Activated CD4-positive, alpha-beta memory T cell treated with anti-CD3 and anti-CD28 coated beads for 36 hours (primary cell): ENCODE measurements at regions of chr9 and their contacts with region 1.

Region 1: GRCh38 chr9:114385412-114386181 is 2.2 kb downstream of the AKNA start:
- DNase-seq: peak; percentile 95
- H3K4me3 Mint-ChIP-seq: peak overlapping the region; percentile 99
- H3K27ac Mint-ChIP-seq: peak overlapping the region; percentile 94
- H3K4me1 Mint-ChIP-seq: peaks cover 65% of the 10 kb centered on the region
- H3K27me3 Mint-ChIP-seq: no peaks in the 10 kb centered on the region

Region 2: DNA sequence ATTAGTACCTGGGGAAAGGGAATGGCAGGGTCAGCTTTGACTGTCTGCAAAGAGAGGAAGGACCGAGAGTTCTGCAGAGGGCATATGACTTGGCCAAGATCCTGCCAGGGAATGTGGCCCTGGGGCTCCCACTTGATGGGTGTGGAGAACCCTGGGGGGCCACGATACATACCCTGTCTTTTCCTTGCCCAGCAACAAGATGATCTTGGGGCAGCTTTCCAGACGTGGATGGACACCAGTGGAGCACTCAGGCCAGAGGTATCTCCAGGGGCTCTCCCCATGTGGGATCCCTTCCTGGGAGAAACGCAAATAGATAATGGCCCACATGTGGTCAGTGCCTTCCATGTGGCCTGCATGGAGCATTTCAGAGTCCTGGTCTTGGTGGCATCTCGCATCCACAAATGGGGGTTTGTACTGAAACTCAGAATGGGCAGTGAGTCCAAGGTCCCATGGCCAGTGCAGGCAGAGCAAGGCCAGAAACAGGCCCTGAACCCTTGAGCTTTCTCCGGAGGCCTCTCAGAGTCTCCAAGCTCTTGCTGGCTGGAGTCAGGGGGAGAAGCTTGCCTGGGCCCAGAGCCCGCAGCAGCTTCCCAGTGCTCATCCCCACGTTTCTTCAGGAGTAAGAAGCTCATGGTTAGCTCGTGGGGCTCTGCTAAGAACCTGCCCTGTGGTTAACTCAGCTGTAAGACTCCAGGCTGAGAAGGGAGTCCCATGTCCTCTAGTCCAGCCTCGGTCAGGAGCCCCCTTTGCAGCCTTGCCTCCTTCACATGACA is 81.0 kb before region 1 on chr9:
- CTCF ChIA-PET with region 1: no interaction called
- POLR2A ChIA-PET with region 1: no interaction called
- intact Hi-C with region 1: no loop called
- DNase-seq: peak; percentile 4
- H3K4me3 Mint-ChIP-seq: no peak overlapping the region
- H3K27ac Mint-ChIP-seq: no peak overlapping the region
- H3K4me1 Mint-ChIP-seq: peaks cover 4% of the 10 kb centered on the region
- H3K27me3 Mint-ChIP-seq: no peaks in the 10 kb centered on the region

Region 3: DNA sequence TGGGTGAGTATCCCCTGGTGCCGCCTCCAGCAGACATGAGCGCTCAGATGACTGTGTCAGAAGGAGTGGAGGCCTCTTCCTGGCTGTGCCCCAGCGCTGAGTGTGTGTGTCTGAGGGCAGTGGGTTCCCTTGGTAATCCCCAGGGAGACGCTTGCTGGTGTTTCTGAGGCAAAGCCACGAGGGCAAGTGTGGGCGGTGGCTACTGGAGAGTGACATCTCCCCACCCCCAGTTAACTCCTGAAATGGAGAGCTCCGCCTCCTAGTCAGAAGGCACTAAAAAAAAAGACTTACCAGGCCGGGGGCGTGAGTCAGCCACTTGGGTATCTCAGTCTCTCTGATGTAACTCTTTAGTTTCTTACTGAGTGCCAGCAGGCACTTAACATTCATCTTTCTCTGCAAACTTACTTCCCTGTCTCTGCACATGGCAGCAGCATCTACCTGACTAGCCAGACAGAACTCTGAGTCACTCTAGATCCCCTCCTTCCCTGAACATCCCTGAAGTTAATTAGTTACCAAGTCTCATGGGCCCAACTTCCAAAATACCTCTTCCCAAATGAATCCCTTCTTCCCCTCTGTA is 36.6 kb before region 1 on chr9:
- CTCF ChIA-PET with region 1: interaction called, 9 read pairs
- POLR2A ChIA-PET with region 1: interaction called, 77 read pairs
- intact Hi-C with region 1: loop called (anchors 1 kb)
- DNase-seq: peak; percentile 97
- H3K4me3 Mint-ChIP-seq: peak overlapping the region; percentile 40
- H3K27ac Mint-ChIP-seq: peak overlapping the region; percentile 100
- H3K4me1 Mint-ChIP-seq: peaks cover 46% of the 10 kb centered on the region
- H3K27me3 Mint-ChIP-seq: no peaks in the 10 kb centered on the region

Region 4: DNA sequence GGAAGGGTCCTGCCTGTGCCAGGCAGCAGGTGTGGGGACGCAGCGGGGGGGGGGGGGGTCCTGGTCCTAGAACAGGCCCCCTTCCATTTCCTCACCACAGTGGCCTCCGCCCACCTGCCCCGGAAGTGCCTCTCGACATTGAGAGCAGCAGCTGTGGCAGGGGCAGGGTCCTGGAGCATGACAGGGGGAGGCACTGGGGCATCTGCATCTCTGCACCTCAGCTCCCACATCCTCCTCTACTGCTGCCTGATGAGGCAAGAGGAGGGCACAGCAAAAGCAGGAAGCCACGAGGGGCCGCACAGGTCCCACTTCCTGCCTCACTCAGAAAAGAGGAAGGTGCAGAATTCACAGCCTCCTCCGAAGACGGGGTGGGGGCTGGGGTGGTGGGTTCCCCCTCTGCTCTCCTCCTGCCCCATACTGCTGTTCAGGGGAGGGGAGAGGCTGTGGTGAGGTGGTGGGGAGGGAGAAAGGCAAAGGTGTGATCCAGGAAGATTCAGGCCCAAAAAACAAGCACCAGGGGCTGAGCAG is 12.6 kb before region 1 on chr9:
- CTCF ChIA-PET with region 1: interaction called, 78 read pairs
- POLR2A ChIA-PET with region 1: interaction called, 100 read pairs
- intact Hi-C with region 1: loop called (anchors 1 kb)
- DNase-seq: peak; percentile 92
- H3K4me3 Mint-ChIP-seq: peak overlapping the region; percentile 68
- H3K27ac Mint-ChIP-seq: peak overlapping the region; percentile 98
- H3K4me1 Mint-ChIP-seq: peaks cover 84% of the 10 kb centered on the region
- H3K27me3 Mint-ChIP-seq: no peaks in the 10 kb centered on the region

Region 5: DNA sequence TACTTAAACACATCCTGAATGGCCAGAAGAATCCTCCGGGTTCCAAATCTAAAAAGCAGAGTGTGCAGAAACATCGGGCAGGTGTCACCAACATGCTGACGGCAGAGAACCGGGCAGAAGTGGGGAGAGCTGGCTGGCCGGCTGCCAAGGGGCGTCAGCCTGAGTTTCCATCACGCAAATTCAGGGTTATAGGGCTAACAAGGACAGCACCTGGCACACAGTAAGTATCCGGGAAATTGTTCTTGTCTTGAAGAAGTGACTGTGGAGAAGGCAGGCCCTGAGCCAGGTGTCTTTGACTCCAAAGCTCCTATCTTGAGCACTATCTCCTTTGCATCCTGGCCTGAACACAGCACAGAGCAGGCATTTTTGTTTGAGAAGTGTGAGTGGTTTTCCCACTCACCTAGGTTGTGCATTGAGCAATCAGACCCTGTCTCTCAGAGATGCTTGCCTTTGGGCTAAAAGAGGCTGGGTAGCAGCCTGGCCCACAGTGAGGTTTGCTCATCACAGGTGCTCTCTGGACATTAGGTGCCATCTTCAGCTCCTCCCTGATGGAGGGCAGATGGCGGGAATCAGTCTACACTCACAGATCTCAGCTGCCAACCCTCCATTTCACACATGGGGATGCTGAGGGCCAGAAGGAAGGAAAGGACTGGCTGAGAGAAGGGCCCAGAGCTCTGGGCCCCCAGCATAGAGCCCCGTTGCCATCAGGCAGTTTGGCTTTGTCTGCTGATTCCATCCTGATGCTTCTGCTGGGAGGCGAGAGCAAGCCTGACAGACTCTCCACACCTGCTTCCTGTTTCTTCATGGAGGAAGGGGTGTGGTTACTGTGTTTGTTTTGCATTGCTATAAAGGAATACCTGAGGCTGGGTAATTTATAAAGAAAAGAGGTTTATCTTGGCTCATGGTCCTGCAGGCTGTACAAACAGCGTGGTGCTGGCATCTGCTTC is 66.9 kb after region 1 on chr9:
- CTCF ChIA-PET with region 1: no interaction called
- POLR2A ChIA-PET with region 1: no interaction called
- intact Hi-C with region 1: no loop called
- DNase-seq: peak; percentile 59
- H3K4me3 Mint-ChIP-seq: no peak overlapping the region
- H3K27ac Mint-ChIP-seq: peak overlapping the region; percentile 64
- H3K4me1 Mint-ChIP-seq: peaks cover 27% of the 10 kb centered on the region
- H3K27me3 Mint-ChIP-seq: no peaks in the 10 kb centered on the region

Region 6: DNA sequence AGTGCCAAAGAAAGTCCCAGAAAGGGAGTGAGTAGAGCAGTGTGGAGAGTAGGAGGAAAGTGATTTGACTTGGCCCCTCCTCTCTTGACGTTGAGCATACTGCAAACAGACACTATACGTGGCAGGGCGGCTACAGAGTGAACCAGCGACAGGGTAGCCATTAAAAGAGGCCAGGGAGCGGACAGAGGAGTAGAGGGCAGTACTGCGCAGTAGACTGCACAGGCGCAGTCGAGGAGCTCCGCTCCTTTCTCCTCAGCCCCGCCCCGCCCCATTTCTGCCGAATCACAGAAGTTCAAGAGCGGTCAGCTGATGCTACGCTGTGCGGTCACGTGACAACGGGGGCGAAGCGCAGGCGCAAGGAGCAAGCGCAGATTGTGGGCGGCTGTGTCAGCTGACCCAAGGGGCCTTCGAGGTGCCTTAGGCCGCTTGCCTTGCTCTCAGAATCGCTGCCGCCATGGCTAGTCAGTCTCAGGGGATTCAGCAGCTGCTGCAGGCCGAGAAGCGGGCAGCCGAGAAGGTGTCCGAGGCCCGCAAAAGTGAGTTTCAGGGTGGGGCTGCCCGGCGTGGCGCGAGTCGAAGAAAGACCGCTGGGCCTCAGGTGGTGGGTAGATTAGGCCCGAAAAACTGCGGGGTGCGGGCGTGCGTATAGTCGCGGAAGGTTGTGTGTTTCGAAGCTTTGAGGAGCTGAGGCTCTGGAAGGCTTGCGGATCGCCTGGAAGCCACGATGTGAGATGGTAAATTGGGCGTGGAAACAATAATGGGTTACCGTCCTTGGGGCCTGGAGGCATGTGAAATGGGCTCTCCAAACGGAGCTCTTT is 202.0 kb after region 1 on chr9 and contains the start of gene ATP6V1G1:
- CTCF ChIA-PET with region 1: interaction called, 4 read pairs
- POLR2A ChIA-PET with region 1: interaction called, 6 read pairs
- intact Hi-C with region 1: loop called (anchors 5 kb)
- DNase-seq: peak; percentile 100
- H3K4me3 Mint-ChIP-seq: peak within 1 kb of the TSS; percentile 99
- H3K27ac Mint-ChIP-seq: peak within 1 kb of the TSS; percentile 97
- H3K4me1 Mint-ChIP-seq: peaks cover 40% of the 10 kb centered on the region
- H3K27me3 Mint-ChIP-seq: no peaks in the 10 kb centered on the region
- total RNA-seq, gene ATP6V1G1: 32.1 to 38.9 TPM